ENCODE measurements at regions of chr19 and their contacts with region 1.

Region 1: GRCh38 chr19:17944301-17944700 is 11.5 kb downstream of the CCDC124 start:
- DNase-seq: no peak
- ATAC-seq: no peak
- H3K4me3 ChIP-seq: no peak overlapping the region
- H3K27ac ChIP-seq: no peak overlapping the region
- H3K4me1 ChIP-seq: peaks cover 16% of the 10 kb centered on the region
- H3K27me3 ChIP-seq: peaks cover 4% of the 10 kb centered on the region
- CTCF ChIP-seq: no peak

Region 2: DNA sequence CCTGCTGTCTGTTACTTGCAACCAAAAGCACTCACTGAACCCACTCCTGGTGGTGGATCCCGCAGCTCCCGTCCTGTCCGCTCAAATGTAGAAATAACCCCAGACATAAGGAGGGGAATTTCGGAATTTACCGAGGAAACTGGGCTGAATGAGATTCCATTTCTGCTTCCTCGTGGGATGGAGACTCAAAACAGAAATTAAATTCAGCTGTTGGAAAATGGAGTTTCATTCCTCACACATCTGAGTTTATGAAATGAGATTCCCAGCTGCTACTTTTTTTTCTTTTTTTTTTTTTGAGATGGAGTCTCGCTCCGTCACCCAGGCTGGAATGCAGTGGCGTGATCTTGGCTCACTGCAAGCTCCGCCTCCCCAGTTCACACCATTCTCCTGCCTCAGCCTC is 344.5 kb before region 1 on chr19:
- intact Hi-C with region 1: no loop called
- DNase-seq: no peak
- ATAC-seq: no peak
- H3K4me3 ChIP-seq: no peak overlapping the region
- H3K27ac ChIP-seq: no peak overlapping the region
- H3K4me1 ChIP-seq: no peaks in the 10 kb centered on the region
- H3K27me3 ChIP-seq: no peaks in the 10 kb centered on the region
- CTCF ChIP-seq: no peak

Region 3: GRCh38 chr19:17996826-17997316 is 52.6 kb after region 1 on chr19:
- intact Hi-C with region 1: loop called (anchors 5 kb)
- DNase-seq: peak; percentile 89
- ATAC-seq: peak; percentile 77 to 87
- H3K4me3 ChIP-seq: no peak overlapping the region
- H3K27ac ChIP-seq: no peak overlapping the region
- H3K4me1 ChIP-seq: peaks cover 20% of the 10 kb centered on the region
- H3K27me3 ChIP-seq: no peaks in the 10 kb centered on the region
- CTCF ChIP-seq: peak; percentile 99

Region 4: DNA sequence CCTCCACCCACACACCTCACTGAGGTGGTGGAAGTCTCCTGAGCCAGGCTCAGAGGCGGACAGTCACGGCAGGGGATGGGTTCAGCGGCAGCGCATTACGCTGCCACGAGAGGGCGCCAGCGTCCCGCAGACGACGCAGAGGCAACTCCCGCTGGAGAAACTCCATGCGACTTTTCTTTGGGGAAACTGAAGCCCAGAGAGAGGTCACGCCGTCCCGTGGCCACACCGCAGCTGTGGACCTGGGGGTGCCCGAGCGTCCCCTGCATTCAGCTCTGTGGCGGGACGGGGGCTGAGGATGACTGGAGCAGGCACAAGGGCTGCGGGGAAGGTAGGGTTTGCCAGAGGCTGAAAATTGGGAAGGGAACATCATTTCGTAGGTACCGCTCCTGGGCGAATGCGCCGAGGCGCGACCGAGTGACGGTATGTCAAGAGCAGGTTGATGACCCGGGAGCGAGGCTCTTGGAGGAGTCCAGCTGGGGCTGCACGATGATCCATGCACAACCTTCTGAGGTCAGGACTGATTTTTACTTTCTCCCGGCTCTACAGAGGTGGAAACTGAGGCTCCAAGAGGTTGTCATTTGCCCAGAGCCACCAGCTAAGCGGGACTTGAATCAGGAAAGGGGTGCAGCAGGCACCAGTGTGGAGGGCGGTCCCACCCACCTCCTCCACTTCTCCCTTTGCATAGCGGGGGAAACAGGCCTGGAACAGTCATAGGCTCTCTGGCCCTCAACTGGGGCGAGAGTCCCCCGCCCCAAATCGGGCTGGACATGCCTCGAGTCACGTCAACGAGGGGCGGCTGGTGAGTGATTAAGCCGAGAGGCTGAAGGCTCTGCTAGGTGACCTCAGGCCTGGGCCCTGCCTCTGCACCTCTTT is 63.0 kb after region 1 on chr19:
- intact Hi-C with region 1: no loop called
- DNase-seq: peak; percentile 90
- ATAC-seq: peak; percentile 90 to 92
- H3K4me3 ChIP-seq: peak overlapping the region; percentile 72
- H3K27ac ChIP-seq: peak overlapping the region; percentile 86
- H3K4me1 ChIP-seq: peaks cover 39% of the 10 kb centered on the region
- H3K27me3 ChIP-seq: no peaks in the 10 kb centered on the region
- CTCF ChIP-seq: peak; percentile 99